RWPE1 (cell line): ENCODE measurements at regions of chr18 and their contacts with region 1.

Region 1: GRCh38 chr18:10519999-10520935 is 5.6 kb upstream of the NAPG start:
- DNase-seq: peak; percentile 76
- H3K27ac ChIP-seq: no peak overlapping the region
- CTCF ChIP-seq: peak; percentile 93

Region 2: GRCh38 chr18:9971313-9971920 is 548.9 kb before region 1 on chr18:
- CTCF ChIA-PET with region 1: interaction called, 31 read pairs
- POLR2A ChIA-PET with region 1: no interaction called
- DNase-seq: peak; percentile 64
- H3K27ac ChIP-seq: no peak overlapping the region
- CTCF ChIP-seq: peak; percentile 77